ENCODE measurements at regions of chr1 and their contacts with region 1.

Region 1: DNA sequence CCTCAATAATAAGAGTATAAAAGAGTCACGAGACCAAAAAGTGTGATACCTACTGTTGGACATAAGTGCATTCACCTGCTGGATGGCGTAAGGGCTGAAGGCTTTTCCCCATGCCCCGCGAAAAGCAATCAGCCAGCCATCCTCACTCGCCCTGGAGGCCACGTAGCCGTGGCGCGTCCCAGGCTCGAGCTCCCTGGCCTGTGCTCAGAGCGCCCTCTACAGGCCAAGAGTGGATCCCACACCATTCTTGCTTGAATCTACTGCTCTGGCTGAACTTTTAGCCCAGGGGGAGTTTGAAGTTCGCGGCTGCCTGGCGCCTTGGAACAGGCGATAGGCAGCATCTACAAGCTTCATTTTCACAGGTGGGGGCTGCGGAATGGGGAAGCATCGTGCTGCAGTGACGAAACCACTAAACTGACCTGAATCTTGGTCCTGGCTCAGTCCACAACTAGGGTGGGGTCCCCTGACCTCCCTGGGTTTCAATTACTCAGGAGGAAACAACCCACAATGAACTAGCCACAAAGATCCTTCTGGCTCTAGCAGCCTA is 70.3 kb upstream of the SERBP1 start:
- DNase-seq: peak; percentile 74 to 87 (median 78)
- H3K4me3 ChIP-seq: no peak overlapping the region
- H3K4me3 Mint-ChIP-seq: peak overlapping the region in 1 of 7 donors; percentile 27
- H3K27ac ChIP-seq: no peak overlapping the region
- H3K27ac Mint-ChIP-seq: peak overlapping the region in 1 of 8 donors; percentile 70
- H3K4me1 ChIP-seq: no peaks in the 10 kb centered on the region
- H3K4me1 Mint-ChIP-seq: peaks cover 4 to 5% (median 5%) of the 10 kb centered on the region in 3 donors
- H3K27me3 ChIP-seq: no peaks in the 10 kb centered on the region
- H3K27me3 Mint-ChIP-seq: peaks cover 9 to 13% of the 10 kb centered on the region in 2 donors

Region 2: DNA sequence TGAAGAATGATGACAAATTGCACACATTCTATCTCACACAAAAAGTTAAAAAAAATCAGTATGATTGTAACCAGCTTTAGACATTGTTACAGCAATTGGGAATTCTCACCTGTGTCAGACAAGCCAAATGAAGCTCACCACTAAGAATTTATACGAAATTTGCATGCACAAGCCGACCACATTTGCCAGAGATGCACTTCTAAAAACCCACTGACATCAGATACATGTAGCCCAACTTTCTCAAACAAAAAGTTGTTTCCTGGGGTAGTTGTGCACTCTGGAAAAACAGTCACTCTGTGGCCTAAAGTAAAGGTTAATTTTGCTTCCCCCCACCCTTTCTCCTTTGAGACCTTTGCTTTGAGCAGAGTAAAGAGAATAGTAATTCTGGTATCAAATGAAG is 260.7 kb before region 1 on chr1:
- CTCF ChIA-PET with region 1: interaction called, 18 read pairs
- POLR2A ChIA-PET with region 1: no interaction called
- DNase-seq: no peak
- H3K4me3 ChIP-seq: no peak overlapping the region
- H3K4me3 Mint-ChIP-seq: no peak overlapping the region
- H3K27ac ChIP-seq: no peak overlapping the region
- H3K27ac Mint-ChIP-seq: no peak overlapping the region
- H3K4me1 ChIP-seq: no peaks in the 10 kb centered on the region
- H3K4me1 Mint-ChIP-seq: no peaks in the 10 kb centered on the region
- H3K27me3 ChIP-seq: no peaks in the 10 kb centered on the region
- H3K27me3 Mint-ChIP-seq: no peaks in the 10 kb centered on the region

Region 3: GRCh38 chr1:67485046-67485811 is 15.3 kb before region 1 on chr1:
- CTCF ChIA-PET with region 1: interaction called, 21 read pairs
- POLR2A ChIA-PET with region 1: no interaction called
- DNase-seq: no peak
- H3K4me3 ChIP-seq: no peak overlapping the region
- H3K4me3 Mint-ChIP-seq: no peak overlapping the region
- H3K27ac ChIP-seq: no peak overlapping the region
- H3K27ac Mint-ChIP-seq: no peak overlapping the region
- H3K4me1 ChIP-seq: no peaks in the 10 kb centered on the region
- H3K4me1 Mint-ChIP-seq: no peaks in the 10 kb centered on the region
- H3K27me3 ChIP-seq: no peaks in the 10 kb centered on the region
- H3K27me3 Mint-ChIP-seq: peaks cover 0 to 3% of the 10 kb centered on the region in 2 donors